ENCODE measurements at regions of chr10 and their contacts with region 1.

Region 1: GRCh38 chr10:126783806-126784557 is 113.5 kb upstream of the C10orf90 start:
- DNase-seq: no peak
- H3K4me3 ChIP-seq: no peak overlapping the region
- H3K4me3 Mint-ChIP-seq: peak overlapping the region; percentile 22
- H3K27ac Mint-ChIP-seq: peak overlapping the region; percentile 77
- H3K4me1 ChIP-seq: peaks cover 80% of the 10 kb centered on the region
- H3K4me1 Mint-ChIP-seq: peaks cover 29% of the 10 kb centered on the region
- H3K27me3 ChIP-seq: no peaks in the 10 kb centered on the region
- H3K27me3 Mint-ChIP-seq: no peaks in the 10 kb centered on the region
- CTCF ChIP-seq: no peak

Region 2: GRCh38 chr10:126839094-126839761 is 55.2 kb after region 1 on chr10:
- CTCF ChIA-PET with region 1: interaction called, 4 read pairs
- POLR2A ChIA-PET with region 1: no interaction called
- intact Hi-C with region 1: loop called (anchors 5 kb)
- DNase-seq: peak; percentile 73 to 78
- H3K4me3 ChIP-seq: no peak overlapping the region
- H3K4me3 Mint-ChIP-seq: no peak overlapping the region
- H3K27ac Mint-ChIP-seq: peak overlapping the region; percentile 59
- H3K4me1 ChIP-seq: peaks cover 47% of the 10 kb centered on the region
- H3K4me1 Mint-ChIP-seq: peaks cover 20% of the 10 kb centered on the region
- H3K27me3 ChIP-seq: no peaks in the 10 kb centered on the region
- H3K27me3 Mint-ChIP-seq: no peaks in the 10 kb centered on the region
- CTCF ChIP-seq: no peak

Region 3: DNA sequence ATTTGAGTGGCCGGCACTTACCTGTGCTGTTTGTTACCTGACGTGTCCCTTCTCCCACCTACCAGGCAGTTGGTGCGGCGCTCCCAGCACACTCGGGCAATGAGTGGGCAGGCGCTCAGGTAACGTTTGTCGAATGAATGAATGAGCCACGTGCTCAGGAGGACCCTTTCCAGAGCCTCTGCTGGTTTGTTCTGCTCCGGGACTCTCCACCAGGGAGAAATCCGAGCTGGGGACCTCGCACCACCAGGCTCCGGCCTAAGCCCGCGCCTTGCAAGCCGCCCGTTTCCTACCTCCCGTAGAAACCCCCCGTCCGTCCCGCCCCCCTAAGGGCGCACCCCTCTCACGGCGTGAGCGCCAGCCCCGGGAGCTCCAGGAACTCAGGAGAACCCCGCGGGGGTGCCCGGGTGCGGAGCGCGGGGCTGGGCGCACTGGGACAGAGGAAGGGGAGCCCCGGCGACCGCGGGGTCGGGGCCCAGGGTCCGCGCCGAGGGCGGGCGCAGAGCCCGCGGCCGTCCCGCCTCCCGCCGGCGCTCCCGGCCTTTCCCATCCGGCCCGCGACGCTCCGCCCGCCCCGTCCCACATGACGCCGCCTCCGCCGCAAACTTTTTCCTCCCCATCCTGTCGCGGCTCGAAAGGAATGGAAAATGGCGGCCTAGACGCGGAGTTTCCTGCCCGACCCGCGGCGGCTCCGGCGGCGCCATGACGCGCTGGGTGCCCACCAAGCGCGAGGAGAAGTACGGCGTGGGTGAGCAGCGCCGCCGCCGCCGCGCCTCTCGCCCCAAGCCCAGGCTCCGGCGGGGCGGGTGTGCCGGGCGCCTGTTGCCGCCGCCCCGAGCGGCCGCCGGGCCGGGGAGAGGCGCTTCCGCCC is 121.1 kb after region 1 on chr10 and contains the start of gene DOCK1:
- CTCF ChIA-PET with region 1: no interaction called
- POLR2A ChIA-PET with region 1: no interaction called
- intact Hi-C with region 1: loop called (anchors 10 kb)
- DNase-seq: peak; percentile 74 to 82
- H3K4me3 ChIP-seq: peak within 1 kb of the TSS; percentile 77
- H3K4me3 Mint-ChIP-seq: peak within 1 kb of the TSS; percentile 77
- H3K27ac Mint-ChIP-seq: peak within 1 kb of the TSS; percentile 99
- H3K4me1 ChIP-seq: peaks cover 15% of the 10 kb centered on the region; the same call in 1 of the 2 replicates
- H3K4me1 Mint-ChIP-seq: peaks cover 30% of the 10 kb centered on the region
- H3K27me3 ChIP-seq: no peaks in the 10 kb centered on the region
- H3K27me3 Mint-ChIP-seq: no peaks in the 10 kb centered on the region
- CTCF ChIP-seq: no peak
- total RNA-seq, gene DOCK1: 82.2 and 83.5 TPM in 2 replicates

Measured in Caco-2 (cell line).